CD8-positive, alpha-beta memory T cell (primary cell): ENCODE measurements at regions of chr2 and their contacts with region 1.

Region 1: GRCh38 chr2:227472265-227473121 is 537 bp downstream of the AGFG1 start:
- DNase-seq: peak; percentile 34 to 70 (median 41)
- H3K4me3 ChIP-seq: peak overlapping the region; percentile 39
- H3K4me3 Mint-ChIP-seq: peak overlapping the region; percentile 87 to 99 (median 93)
- H3K27ac ChIP-seq: no peak overlapping the region
- H3K27ac Mint-ChIP-seq: peak overlapping the region in 7 of 8 donors; percentile 52 to 96 (median 82)
- H3K4me1 ChIP-seq: peaks cover 40% of the 10 kb centered on the region
- H3K4me1 Mint-ChIP-seq: peaks cover 36 to 52% (median 48%) of the 10 kb centered on the region in 3 donors
- H3K27me3 ChIP-seq: no peaks in the 10 kb centered on the region
- H3K27me3 Mint-ChIP-seq: peaks cover 0 to 4% of the 10 kb centered on the region in 2 donors

Region 2: GRCh38 chr2:227856697-227857096 is 384.2 kb after region 1 on chr2:
- CTCF ChIA-PET with region 1: no interaction called
- POLR2A ChIA-PET with region 1: interaction called, 13 read pairs
- DNase-seq: no peak
- H3K4me3 ChIP-seq: no peak overlapping the region
- H3K4me3 Mint-ChIP-seq: no peak overlapping the region
- H3K27ac ChIP-seq: no peak overlapping the region
- H3K27ac Mint-ChIP-seq: no peak overlapping the region
- H3K4me1 ChIP-seq: no peaks in the 10 kb centered on the region
- H3K4me1 Mint-ChIP-seq: no peaks in the 10 kb centered on the region
- H3K27me3 ChIP-seq: no peaks in the 10 kb centered on the region
- H3K27me3 Mint-ChIP-seq: peaks cover 6 to 14% of the 10 kb centered on the region in 2 donors